ENCODE measurements at regions of chr6 and their contacts with region 1.

Region 1: GRCh38 chr6:106608062-106608668 is 21.1 kb downstream of the RTN4IP1 start:
- DNase-seq: peak; percentile 61
- H3K4me3 ChIP-seq: no peak overlapping the region
- H3K27ac ChIP-seq: no peak overlapping the region
- H3K4me1 ChIP-seq: no peaks in the 10 kb centered on the region
- H3K27me3 ChIP-seq: no peaks in the 10 kb centered on the region
- CTCF ChIP-seq: peak; percentile 44 to 48
- POLR2A ChIP-seq: no peak

Region 2: DNA sequence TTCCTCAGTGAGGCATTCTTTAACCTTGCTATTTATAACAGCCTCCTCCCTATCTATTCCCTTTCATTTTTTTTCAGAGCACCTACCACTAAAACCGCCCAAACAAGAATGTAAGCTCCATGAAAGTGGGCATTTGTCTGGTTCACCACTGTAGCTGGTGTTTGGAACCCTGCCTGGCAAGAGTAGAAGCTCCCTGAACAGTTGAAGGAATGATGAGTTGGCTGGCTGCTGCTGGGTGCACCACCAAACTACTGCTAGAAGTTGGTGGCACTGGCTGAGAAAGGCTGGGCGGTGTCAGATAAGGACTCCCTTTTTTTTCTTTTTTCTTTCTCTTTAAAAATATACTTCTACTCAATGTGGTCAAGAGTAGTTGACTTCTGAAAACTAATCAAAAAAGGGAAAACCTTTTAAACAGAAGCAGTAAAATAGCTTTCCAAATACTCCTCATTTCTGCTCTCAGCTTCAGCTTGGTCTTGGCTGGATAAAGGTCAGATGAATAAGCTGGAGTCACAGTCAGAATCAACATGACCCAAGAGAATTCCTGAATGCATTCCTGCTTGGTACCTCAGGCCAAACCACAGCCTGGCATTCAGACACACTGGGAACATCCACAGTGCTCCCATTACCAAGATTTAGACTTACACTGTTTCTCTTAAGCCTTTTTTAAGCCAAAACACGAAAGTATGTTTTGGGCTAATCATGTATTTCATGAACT is 16.9 kb before region 1 on chr6:
- CTCF ChIA-PET with region 1: interaction called, 11 read pairs
- POLR2A ChIA-PET with region 1: no interaction called
- dilution Hi-C with region 1: no loop called
- intact Hi-C with region 1: no loop called
- DNase-seq: no peak
- H3K4me3 ChIP-seq: no peak overlapping the region
- H3K27ac ChIP-seq: no peak overlapping the region
- H3K4me1 ChIP-seq: no peaks in the 10 kb centered on the region
- H3K27me3 ChIP-seq: no peaks in the 10 kb centered on the region
- CTCF ChIP-seq: no peak
- POLR2A ChIP-seq: no peak

Region 3: GRCh38 chr6:106620931-106621672 is 12.9 kb after region 1 on chr6:
- CTCF ChIA-PET with region 1: interaction called, 13 read pairs
- POLR2A ChIA-PET with region 1: no interaction called
- dilution Hi-C with region 1: no loop called
- intact Hi-C with region 1: no loop called
- DNase-seq: peak; percentile 88
- H3K4me3 ChIP-seq: no peak overlapping the region
- H3K27ac ChIP-seq: no peak overlapping the region
- H3K4me1 ChIP-seq: peaks cover 7% of the 10 kb centered on the region
- H3K27me3 ChIP-seq: no peaks in the 10 kb centered on the region
- CTCF ChIP-seq: no peak
- POLR2A ChIP-seq: no peak

Region 4: GRCh38 chr6:106963544-106963943 is 355.4 kb after region 1 on chr6:
- CTCF ChIA-PET with region 1: no interaction called
- POLR2A ChIA-PET with region 1: no interaction called
- dilution Hi-C with region 1: no loop called
- intact Hi-C with region 1: no loop called
- DNase-seq: no peak
- H3K4me3 ChIP-seq: no peak overlapping the region
- H3K27ac ChIP-seq: no peak overlapping the region
- H3K4me1 ChIP-seq: no peaks in the 10 kb centered on the region
- H3K27me3 ChIP-seq: no peaks in the 10 kb centered on the region
- CTCF ChIP-seq: no peak
- POLR2A ChIP-seq: no peak

Region 5: GRCh38 chr6:106979427-106979884 is 371.3 kb after region 1 on chr6:
- CTCF ChIA-PET with region 1: interaction called, 34 read pairs
- POLR2A ChIA-PET with region 1: no interaction called
- dilution Hi-C with region 1: no loop called
- intact Hi-C with region 1: loop called (anchors 1 kb)
- DNase-seq: peak; percentile 78
- H3K4me3 ChIP-seq: no peak overlapping the region
- H3K27ac ChIP-seq: no peak overlapping the region
- H3K4me1 ChIP-seq: no peaks in the 10 kb centered on the region
- H3K27me3 ChIP-seq: peaks cover 11 to 23% of the 10 kb centered on the region in 2 experiments
- CTCF ChIP-seq: peak; percentile 93 to 94
- POLR2A ChIP-seq: no peak

Measured in endothelial cell of umbilical vein (primary cell).